MCF 10A (cell line): ENCODE measurements at regions of chr15 and their contacts with region 1.

Region 1: GRCh38 chr15:47196057-47196456 is 521.2 kb upstream of the SEMA6D start:
- DNase-seq: peak; percentile 76
- H3K4me3 Mint-ChIP-seq: no peak overlapping the region
- H3K27ac Mint-ChIP-seq: no peak overlapping the region
- H3K4me1 Mint-ChIP-seq: no peaks in the 10 kb centered on the region
- H3K27me3 Mint-ChIP-seq: no peaks in the 10 kb centered on the region
- CTCF ChIP-seq: peak; percentile 82

Region 2: GRCh38 chr15:46091860-46092450 is 1104.1 kb before region 1 on chr15:
- CTCF ChIA-PET with region 1: no interaction called
- POLR2A ChIA-PET with region 1: no interaction called
- intact Hi-C with region 1: loop called (anchors 10 kb)
- DNase-seq: peak; percentile 16
- H3K4me3 Mint-ChIP-seq: no peak overlapping the region
- H3K27ac Mint-ChIP-seq: no peak overlapping the region
- H3K4me1 Mint-ChIP-seq: no peaks in the 10 kb centered on the region
- H3K27me3 Mint-ChIP-seq: no peaks in the 10 kb centered on the region
- CTCF ChIP-seq: peak; percentile 67

Region 3: DNA sequence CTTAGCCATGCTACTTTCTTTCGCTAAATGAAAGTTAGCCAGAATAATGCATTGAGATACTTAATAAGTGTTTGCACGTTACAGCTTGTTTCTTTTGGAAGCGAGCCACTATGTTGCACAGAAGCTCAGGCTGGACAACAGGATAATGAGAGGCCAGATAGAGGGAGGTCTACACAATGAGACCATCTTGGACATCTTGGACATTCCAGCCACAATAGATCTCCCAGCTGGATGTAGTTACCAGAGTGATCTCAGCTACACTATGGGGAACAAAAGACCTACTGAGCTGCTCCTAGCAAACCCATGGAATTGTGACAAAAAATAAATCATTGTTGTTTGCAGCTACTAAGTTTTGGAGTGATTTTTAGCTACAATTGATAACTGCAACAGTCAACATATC is 18.9 kb before region 1 on chr15:
- CTCF ChIA-PET with region 1: no interaction called
- POLR2A ChIA-PET with region 1: no interaction called
- intact Hi-C with region 1: no loop called
- DNase-seq: no peak
- H3K4me3 Mint-ChIP-seq: no peak overlapping the region
- H3K27ac Mint-ChIP-seq: no peak overlapping the region
- H3K4me1 Mint-ChIP-seq: peaks cover under 1% of the 10 kb centered on the region
- H3K27me3 Mint-ChIP-seq: no peaks in the 10 kb centered on the region
- CTCF ChIP-seq: no peak

Region 4: DNA sequence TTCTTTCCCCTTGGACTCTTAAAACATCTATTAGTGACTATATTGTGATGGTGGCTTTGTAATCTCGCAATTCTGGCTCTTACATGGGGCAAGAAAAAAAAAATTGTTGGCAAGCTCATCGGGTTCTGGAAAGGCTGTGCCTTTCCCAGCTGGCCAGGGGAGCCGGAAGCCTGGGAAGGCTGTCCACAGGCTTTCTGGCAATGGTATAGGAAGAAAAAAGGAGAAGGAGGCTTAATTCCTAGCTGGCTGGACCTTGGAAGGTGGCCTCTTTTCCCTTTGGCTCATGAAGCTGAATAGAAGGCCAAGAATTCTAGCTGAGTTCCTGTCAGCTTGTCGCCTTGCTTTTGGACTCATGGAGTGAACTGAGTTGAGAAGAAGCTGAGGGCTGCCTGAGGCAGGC is 277.8 kb after region 1 on chr15:
- CTCF ChIA-PET with region 1: interaction called, 4 read pairs
- POLR2A ChIA-PET with region 1: no interaction called
- intact Hi-C with region 1: loop called (anchors 1 kb)
- DNase-seq: no peak
- H3K4me3 Mint-ChIP-seq: no peak overlapping the region
- H3K27ac Mint-ChIP-seq: no peak overlapping the region
- H3K4me1 Mint-ChIP-seq: peaks cover 6% of the 10 kb centered on the region
- H3K27me3 Mint-ChIP-seq: no peaks in the 10 kb centered on the region
- CTCF ChIP-seq: no peak

Region 5: GRCh38 chr15:47614360-47614759 is 418.3 kb after region 1 on chr15:
- CTCF ChIA-PET with region 1: no interaction called
- POLR2A ChIA-PET with region 1: no interaction called
- intact Hi-C with region 1: loop called (anchors 2 kb)
- DNase-seq: no peak
- H3K4me3 Mint-ChIP-seq: no peak overlapping the region
- H3K27ac Mint-ChIP-seq: no peak overlapping the region
- H3K4me1 Mint-ChIP-seq: no peaks in the 10 kb centered on the region
- H3K27me3 Mint-ChIP-seq: no peaks in the 10 kb centered on the region
- CTCF ChIP-seq: no peak

Region 6: DNA sequence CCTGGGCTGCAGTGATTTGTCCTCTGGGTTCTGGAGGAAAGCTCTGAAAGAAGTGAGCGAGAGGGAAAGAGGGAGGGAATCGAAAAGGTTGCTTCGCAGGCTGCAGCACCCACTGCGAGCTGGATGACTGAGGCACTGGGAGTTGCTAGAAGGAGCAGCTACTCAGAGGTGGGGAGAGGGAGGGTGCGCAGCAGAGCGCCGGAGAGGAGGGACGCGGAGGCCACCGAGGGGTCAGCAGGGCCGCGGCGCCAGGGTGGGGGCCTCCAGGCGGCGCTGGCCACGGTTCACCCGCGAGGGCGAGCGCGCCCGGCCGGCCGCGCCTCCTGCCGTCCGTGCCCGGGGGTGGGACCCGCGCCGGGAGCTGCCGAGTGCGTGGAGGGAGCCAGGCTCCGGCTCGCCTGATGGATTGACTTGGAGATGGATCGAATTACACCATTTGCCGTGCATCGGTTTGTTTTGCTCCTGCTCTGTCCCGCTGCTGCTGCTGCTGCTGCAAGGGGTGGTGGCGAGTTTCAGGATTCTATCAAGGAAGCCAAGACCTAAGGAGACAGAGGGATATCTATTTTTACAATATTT is 521.1 kb after region 1 on chr15 and contains the start of gene SEMA6D:
- CTCF ChIA-PET with region 1: interaction called, 18 read pairs
- POLR2A ChIA-PET with region 1: no interaction called
- intact Hi-C with region 1: loop called (anchors 1 kb)
- DNase-seq: peak; percentile 73
- H3K4me3 Mint-ChIP-seq: peak within 1 kb of the TSS; percentile 81
- H3K27ac Mint-ChIP-seq: peak within 1 kb of the TSS; percentile 25
- H3K4me1 Mint-ChIP-seq: peaks cover 5% of the 10 kb centered on the region
- H3K27me3 Mint-ChIP-seq: no peaks in the 10 kb centered on the region
- CTCF ChIP-seq: peak; percentile 40
- total RNA-seq, gene SEMA6D: 0.65 and 1.1 TPM in 2 replicates

Region 7: DNA sequence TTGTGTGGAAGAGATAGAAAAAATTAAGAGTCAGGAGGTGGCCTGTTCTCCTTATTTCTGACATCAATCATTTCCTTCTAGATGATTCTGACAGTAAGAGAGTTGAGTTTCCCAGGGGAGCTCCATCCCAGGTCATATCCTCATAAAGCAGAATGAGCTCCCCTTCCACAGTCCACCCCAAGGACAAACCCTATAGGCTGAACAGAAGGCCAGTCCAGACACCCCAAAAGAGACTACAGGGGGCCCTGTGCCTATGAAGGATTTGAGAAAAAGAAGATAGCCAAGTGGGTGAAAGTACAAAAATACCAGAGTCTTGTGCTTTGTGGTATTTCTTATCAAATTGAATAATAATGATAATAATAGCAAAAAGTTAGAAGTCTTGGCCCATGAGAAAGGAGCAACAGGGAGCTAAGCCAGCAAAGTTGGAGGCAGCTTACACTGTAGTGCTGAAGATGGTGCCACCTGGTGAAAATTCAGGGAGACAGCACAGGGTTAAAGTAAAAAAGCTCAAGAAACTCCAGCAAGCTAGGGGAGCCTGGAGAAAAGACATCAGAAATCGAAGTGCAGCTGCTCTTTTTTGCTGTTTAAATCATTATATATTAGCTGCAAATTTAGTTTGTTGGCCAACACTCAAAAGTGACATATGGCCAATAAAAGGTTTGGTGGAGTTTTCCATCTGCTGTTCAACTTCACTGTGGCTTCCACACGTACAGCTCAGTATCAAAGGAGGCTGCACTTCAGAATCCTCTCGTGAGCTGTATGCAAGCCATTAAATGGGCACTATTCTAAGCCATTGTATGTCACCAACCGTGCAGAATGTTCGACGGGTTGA is 888.9 kb after region 1 on chr15:
- CTCF ChIA-PET with region 1: interaction called, 10 read pairs
- POLR2A ChIA-PET with region 1: no interaction called
- intact Hi-C with region 1: loop called (anchors 1 kb)
- DNase-seq: peak; percentile 49
- H3K4me3 Mint-ChIP-seq: no peak overlapping the region
- H3K27ac Mint-ChIP-seq: no peak overlapping the region
- H3K4me1 Mint-ChIP-seq: peaks cover 12% of the 10 kb centered on the region
- H3K27me3 Mint-ChIP-seq: no peaks in the 10 kb centered on the region
- CTCF ChIP-seq: peak; percentile 47

Region 8: DNA sequence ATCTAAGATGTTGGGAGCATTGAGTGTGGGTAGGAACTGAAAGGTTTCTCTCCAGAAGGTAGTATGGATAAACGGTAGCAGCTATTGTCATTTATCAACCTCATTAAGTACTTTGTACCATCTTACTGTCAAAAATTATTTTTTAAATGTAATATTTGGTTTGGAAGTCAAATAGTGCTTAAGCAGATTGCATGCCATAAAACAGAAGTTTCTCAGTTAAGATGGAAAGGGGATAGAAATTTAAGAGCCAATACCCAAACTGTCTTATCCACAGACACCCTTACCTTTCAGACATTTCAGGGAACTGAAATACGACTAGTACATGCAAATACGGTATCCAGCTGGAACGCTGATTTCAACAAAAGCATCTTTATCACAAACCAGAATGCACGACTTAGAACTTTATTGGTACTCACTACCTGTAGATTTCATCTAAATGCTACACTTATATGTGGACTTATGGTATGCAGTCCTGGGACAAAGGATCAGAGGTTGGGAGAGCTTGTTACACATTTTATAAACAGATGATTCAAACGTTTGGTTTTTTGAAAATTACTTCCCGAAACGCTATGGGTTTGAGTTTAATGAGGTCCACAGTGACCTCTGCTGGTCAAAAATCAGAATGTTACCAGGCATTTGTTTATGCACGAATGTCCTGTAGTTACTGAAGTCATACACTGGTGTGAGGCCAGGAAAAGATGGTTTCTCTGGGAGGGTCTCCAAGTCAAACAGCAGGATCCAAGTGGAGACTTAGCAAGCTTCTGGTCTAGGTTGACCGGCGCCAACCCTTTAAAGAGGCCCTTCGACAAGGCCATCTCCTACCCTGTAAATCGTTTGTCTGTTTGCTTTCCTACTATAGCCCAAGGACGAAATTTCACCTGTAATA is 1089.5 kb after region 1 on chr15:
- CTCF ChIA-PET with region 1: interaction called, 50 read pairs
- POLR2A ChIA-PET with region 1: interaction called, 5 read pairs
- intact Hi-C with region 1: loop called (anchors 2 kb)
- DNase-seq: peak; percentile 77
- H3K4me3 Mint-ChIP-seq: peak overlapping the region; percentile 58
- H3K27ac Mint-ChIP-seq: peak overlapping the region; percentile 31
- H3K4me1 Mint-ChIP-seq: no peaks in the 10 kb centered on the region
- H3K27me3 Mint-ChIP-seq: no peaks in the 10 kb centered on the region
- CTCF ChIP-seq: peak; percentile 53